Endothelial cell of umbilical vein (primary cell): ENCODE measurements at regions of chr17 and their contacts with region 1.

Region 1: GRCh38 chr17:60142872-60143499 is 6.8 kb upstream of the CA4 start:
- DNase-seq: peak; percentile 89
- H3K4me3 ChIP-seq: no peak overlapping the region
- H3K27ac ChIP-seq: no peak overlapping the region
- H3K4me1 ChIP-seq: peaks cover 19% of the 10 kb centered on the region
- H3K27me3 ChIP-seq: peaks cover 64 to 66% of the 10 kb centered on the region in 2 experiments
- CTCF ChIP-seq: peak; percentile 83 to 84
- POLR2A ChIP-seq: no peak

Region 2: GRCh38 chr17:60161674-60162546 is 18.9 kb after region 1 on chr17:
- CTCF ChIA-PET with region 1: interaction called, 6 read pairs
- POLR2A ChIA-PET with region 1: no interaction called
- dilution Hi-C with region 1: no loop called
- intact Hi-C with region 1: loop called (anchors 2 kb)
- DNase-seq: peak; percentile 43
- H3K4me3 ChIP-seq: no peak overlapping the region
- H3K27ac ChIP-seq: no peak overlapping the region
- H3K4me1 ChIP-seq: peaks cover 3% of the 10 kb centered on the region
- H3K27me3 ChIP-seq: no peaks in the 10 kb centered on the region
- CTCF ChIP-seq: no peak
- POLR2A ChIP-seq: no peak

Region 3: GRCh38 chr17:60169921-60170742 is 27.1 kb after region 1 on chr17:
- CTCF ChIA-PET with region 1: interaction called, 42 read pairs
- POLR2A ChIA-PET with region 1: no interaction called
- dilution Hi-C with region 1: no loop called
- intact Hi-C with region 1: loop called (anchors 1 kb)
- DNase-seq: peak; percentile 94
- H3K4me3 ChIP-seq: no peak overlapping the region
- H3K27ac ChIP-seq: peak overlapping the region; percentile 48
- H3K4me1 ChIP-seq: peaks cover 20% of the 10 kb centered on the region
- H3K27me3 ChIP-seq: no peaks in the 10 kb centered on the region
- CTCF ChIP-seq: no peak
- POLR2A ChIP-seq: peak; percentile 33

Region 4: DNA sequence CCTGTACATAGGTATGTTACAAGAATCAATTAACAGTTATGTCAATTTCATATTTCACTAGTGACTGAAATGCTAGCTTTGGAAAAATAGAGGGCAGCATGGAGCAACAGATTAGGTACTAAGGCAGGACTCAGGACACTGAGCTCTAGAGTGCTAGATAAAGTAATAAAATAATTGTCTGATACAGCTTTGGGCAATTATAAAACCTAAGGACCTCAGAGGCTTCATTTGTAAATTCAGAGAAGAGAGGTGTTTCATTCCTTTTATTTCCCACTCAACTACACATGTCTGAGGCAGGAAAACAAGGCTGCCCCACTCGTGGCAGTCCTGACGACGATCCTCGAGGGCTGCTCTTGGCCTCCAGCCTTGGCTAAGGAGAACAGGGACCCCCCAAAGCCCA is 88.2 kb after region 1 on chr17:
- CTCF ChIA-PET with region 1: interaction called, 21 read pairs
- POLR2A ChIA-PET with region 1: no interaction called
- dilution Hi-C with region 1: no loop called
- intact Hi-C with region 1: loop called (anchors 1 kb)
- DNase-seq: peak; percentile 45
- H3K4me3 ChIP-seq: no peak overlapping the region
- H3K27ac ChIP-seq: no peak overlapping the region
- H3K4me1 ChIP-seq: no peaks in the 10 kb centered on the region
- H3K27me3 ChIP-seq: no peaks in the 10 kb centered on the region
- CTCF ChIP-seq: peak; percentile 22 to 30
- POLR2A ChIP-seq: no peak

Region 5: DNA sequence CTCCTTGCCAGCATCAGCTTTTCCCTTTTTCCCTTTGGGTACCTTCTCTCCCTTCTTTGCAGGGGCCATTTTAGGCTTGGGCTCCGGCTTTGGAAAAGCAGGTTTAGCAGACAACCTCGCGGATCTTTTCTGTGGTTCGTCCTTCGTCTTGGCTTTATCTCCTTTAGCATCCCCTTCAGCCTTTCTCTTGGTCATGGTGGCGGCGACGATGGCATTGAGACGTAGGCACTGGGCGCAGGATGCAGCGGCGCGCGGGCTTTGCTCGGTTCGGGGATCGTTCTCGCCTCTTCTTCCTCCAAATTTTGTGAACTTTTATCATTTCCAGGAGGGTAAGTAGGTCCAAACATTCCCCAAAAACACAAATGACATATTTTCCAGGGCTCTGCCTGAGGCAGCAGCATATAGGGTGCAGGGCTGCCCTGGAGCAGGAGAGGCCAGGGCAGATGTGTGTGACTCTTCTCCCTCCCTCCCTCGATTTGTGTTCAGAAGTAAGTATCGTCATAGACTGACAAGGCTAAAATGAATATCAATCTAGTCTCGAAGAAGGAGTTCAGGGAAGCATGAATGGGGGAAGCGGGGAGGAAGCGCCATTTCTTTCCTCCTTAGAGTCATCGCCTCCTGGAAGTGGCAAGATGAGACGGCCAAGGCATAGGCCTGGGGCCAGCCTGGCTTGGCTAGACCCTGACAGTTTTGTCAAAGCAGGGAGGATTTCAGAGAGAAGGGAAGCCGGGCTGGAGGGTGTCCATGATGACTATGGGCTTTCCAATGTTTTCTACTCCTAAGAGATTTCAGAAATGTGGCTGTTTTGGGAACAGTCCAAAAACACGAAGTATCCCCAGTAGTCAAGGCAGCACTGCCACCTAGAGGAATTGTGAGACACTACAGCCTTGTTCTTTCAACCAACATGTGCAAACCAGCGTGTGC is 292.5 kb after region 1 on chr17:
- CTCF ChIA-PET with region 1: interaction called, 4 read pairs
- POLR2A ChIA-PET with region 1: no interaction called
- dilution Hi-C with region 1: no loop called
- intact Hi-C with region 1: loop called (anchors 1 kb)
- DNase-seq: peak; percentile 75
- H3K4me3 ChIP-seq: no peak overlapping the region
- H3K27ac ChIP-seq: no peak overlapping the region
- H3K4me1 ChIP-seq: peaks cover 2% of the 10 kb centered on the region
- H3K27me3 ChIP-seq: no peaks in the 10 kb centered on the region
- CTCF ChIP-seq: peak; percentile 75 to 77
- POLR2A ChIP-seq: no peak

Region 6: DNA sequence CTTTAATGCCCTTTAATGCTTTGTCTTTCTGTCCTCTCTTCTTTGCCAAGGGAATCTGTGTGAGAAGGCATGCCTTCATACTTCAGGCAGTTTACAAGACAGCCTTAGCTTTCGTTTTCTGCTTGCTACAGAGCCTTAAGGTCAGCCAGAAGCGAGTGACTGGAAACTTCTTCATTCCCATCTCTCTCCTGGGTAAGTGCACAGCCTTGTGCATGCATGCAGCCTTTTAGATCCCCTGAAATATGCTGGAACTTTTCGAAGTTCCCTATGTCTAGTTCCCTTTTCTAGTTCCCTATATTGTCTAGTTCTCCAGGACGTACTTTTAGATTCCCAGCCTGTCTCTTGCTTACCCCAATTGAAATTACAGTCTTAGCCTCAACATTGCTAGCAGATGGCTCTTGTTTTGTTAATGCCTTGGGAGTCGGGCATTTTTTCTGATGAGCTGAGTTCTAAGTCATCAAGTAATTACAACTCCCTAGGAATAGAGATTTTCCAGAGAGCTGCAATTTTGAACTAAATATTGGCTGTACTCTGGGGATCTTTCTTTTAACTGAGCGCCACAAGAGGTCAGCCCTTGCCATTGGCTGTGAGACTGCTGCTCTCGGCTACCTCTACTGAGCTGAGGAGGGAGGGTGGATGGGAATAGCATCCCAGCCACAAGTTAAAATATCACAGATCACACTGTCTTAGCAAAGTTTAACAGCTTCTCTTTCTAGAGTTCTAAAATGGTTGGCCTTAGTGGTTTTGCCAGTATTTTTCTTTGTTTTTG is 434.3 kb after region 1 on chr17:
- CTCF ChIA-PET with region 1: no interaction called
- POLR2A ChIA-PET with region 1: no interaction called
- dilution Hi-C with region 1: no loop called
- intact Hi-C with region 1: loop called (anchors 10 kb)
- DNase-seq: peak; percentile 67
- H3K4me3 ChIP-seq: peak overlapping the region in 2 of 3 experiments; percentile 5 to 10
- H3K27ac ChIP-seq: peak overlapping the region; percentile 3
- H3K4me1 ChIP-seq: peaks cover 21% of the 10 kb centered on the region
- H3K27me3 ChIP-seq: no peaks in the 10 kb centered on the region
- CTCF ChIP-seq: no peak
- POLR2A ChIP-seq: no peak

Region 7: DNA sequence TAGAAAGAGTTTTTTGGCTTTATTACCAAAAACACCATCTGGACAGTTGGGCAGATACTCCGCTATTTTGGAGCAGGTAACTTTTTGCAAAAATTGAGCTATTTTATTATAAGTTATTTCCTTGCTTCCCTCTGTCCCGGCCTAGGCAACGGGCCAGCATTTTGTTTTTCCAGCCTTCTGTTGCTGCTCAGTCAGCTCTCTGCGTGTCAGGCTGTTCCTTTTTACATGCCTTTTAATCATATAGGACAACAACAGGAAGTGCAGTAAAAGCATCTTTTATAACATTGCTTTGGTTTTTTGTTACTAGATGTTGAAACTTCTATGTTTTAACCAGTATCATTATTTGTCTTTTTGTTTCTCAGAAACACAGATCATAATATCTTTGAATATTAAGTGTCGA is 487.4 kb after region 1 on chr17:
- CTCF ChIA-PET with region 1: no interaction called
- POLR2A ChIA-PET with region 1: no interaction called
- dilution Hi-C with region 1: no loop called
- intact Hi-C with region 1: loop called (anchors 10 kb)
- DNase-seq: peak; percentile 89
- H3K4me3 ChIP-seq: no peak overlapping the region
- H3K27ac ChIP-seq: peak overlapping the region; percentile 34
- H3K4me1 ChIP-seq: peaks cover 8% of the 10 kb centered on the region
- H3K27me3 ChIP-seq: no peaks in the 10 kb centered on the region
- CTCF ChIP-seq: no peak
- POLR2A ChIP-seq: no peak